ENCODE measurements at regions of chr11 and their contacts with region 1.

Region 1: DNA sequence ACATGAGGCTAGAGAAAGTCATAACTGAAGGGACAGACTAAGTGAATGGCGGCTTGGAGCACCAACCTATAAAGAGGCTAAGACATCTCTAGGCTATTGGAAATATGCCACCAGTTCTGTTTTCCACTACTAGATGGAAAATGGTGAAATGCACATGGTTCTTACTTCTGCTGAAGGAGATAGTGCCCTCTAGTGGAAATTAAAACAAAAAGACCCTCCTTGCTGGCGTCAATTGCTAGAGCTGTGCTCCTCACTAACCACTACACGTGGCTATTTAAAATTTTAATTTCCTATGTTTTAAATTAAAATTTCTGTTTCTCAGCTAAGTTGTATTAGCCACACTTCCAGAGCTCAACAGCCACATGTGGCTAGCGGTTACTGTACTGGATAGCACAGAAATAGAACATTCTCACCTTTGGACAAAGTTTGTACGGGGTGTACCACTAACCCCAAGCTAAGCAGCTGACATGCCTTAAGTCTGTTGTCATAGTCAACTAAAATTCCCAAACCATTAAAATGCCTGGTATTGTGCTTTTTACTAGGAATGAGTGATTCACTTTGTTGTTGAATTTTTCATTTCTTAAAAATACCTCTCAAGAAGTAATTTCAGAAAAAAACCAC is 34.1 kb upstream of the CALCA start:
- DNase-seq: peak in 3 of 9 experiments; percentile 13 to 61 (median 50)
- ATAC-seq: peak; percentile 34
- H3K4me3 ChIP-seq: no peak overlapping the region
- H3K4me3 Mint-ChIP-seq: no peak overlapping the region
- H3K27ac ChIP-seq: no peak overlapping the region
- H3K27ac Mint-ChIP-seq: no peak overlapping the region
- H3K4me1 ChIP-seq: no peaks in the 10 kb centered on the region
- H3K4me1 Mint-ChIP-seq: no peaks in the 10 kb centered on the region
- H3K27me3 ChIP-seq: no peaks in the 10 kb centered on the region
- H3K27me3 Mint-ChIP-seq: peaks cover 34% of the 10 kb centered on the region
- CTCF ChIP-seq: peak; percentile 56

Region 2: DNA sequence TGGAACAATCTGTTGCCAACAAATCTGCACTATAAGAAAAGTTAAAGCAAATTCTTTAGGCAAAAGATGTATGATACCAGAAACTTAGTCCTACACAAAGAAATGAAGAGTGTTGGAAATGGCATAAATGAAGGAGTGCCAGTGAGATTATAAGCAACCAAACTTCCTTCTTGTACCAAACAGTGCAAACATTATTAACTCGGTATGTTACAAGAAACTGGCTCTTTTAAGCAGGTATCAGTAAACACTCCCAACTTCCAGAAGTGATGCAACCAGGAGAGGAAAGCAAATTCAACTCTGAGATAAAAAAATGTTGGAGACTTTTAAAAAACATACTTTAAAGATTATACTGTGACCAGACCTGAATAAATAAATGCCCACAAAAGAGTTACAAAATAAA is 535.1 kb before region 1 on chr11:
- CTCF ChIA-PET with region 1: no interaction called
- POLR2A ChIA-PET with region 1: no interaction called
- intact Hi-C with region 1: loop called in 1 of 2 experiments (anchors 10 kb)
- DNase-seq: no peak
- ATAC-seq: no peak
- H3K4me3 ChIP-seq: no peak overlapping the region
- H3K4me3 Mint-ChIP-seq: no peak overlapping the region
- H3K27ac ChIP-seq: no peak overlapping the region
- H3K27ac Mint-ChIP-seq: peak overlapping the region; percentile 14
- H3K4me1 ChIP-seq: peaks cover 5% of the 10 kb centered on the region
- H3K4me1 Mint-ChIP-seq: peaks cover 51% of the 10 kb centered on the region
- H3K27me3 ChIP-seq: no peaks in the 10 kb centered on the region
- H3K27me3 Mint-ChIP-seq: no peaks in the 10 kb centered on the region
- CTCF ChIP-seq: no peak

Region 3: DNA sequence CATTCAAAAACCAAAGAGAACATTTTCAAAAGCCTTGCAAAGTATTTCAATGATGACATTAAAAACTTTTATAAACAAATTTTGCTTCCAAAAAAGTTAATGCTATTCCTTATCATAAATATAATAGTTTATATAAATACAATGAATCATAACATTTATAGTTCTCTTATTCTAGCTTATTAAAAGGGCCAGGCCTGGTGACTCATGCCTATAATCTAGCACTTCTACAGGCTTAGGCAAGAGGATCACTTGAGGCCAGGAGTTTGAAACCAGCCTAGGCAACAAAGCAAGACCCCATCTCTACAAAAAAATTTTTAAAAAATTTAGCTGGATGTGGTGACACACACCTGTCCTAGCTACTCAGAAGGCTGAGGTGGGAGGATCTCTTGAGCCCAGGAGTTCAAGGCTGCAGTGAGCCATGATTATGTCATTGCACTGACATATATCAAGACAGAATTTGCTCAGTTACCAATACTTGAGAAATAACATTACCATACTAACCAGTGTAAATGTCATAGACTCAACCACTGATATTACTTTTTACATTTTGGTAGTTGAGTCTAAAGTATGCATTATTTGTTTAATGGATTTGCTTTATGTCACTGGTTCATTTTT is 170.7 kb before region 1 on chr11:
- CTCF ChIA-PET with region 1: no interaction called
- POLR2A ChIA-PET with region 1: no interaction called
- intact Hi-C with region 1: no loop called
- DNase-seq: no peak
- ATAC-seq: no peak
- H3K4me3 ChIP-seq: no peak overlapping the region
- H3K4me3 Mint-ChIP-seq: no peak overlapping the region
- H3K27ac ChIP-seq: no peak overlapping the region
- H3K27ac Mint-ChIP-seq: no peak overlapping the region
- H3K4me1 ChIP-seq: no peaks in the 10 kb centered on the region
- H3K4me1 Mint-ChIP-seq: no peaks in the 10 kb centered on the region
- H3K27me3 ChIP-seq: no peaks in the 10 kb centered on the region
- H3K27me3 Mint-ChIP-seq: no peaks in the 10 kb centered on the region
- CTCF ChIP-seq: no peak

Region 4: GRCh38 chr11:14967581-14968243 is 38.5 kb before region 1 on chr11:
- CTCF ChIA-PET with region 1: no interaction called
- POLR2A ChIA-PET with region 1: no interaction called
- intact Hi-C with region 1: no loop called
- DNase-seq: no peak
- ATAC-seq: no peak
- H3K4me3 ChIP-seq: no peak overlapping the region
- H3K4me3 Mint-ChIP-seq: no peak overlapping the region
- H3K27ac ChIP-seq: no peak overlapping the region
- H3K27ac Mint-ChIP-seq: no peak overlapping the region
- H3K4me1 ChIP-seq: peaks cover 3% of the 10 kb centered on the region
- H3K4me1 Mint-ChIP-seq: peaks cover 5% of the 10 kb centered on the region
- H3K27me3 ChIP-seq: peaks cover 0 to 2% of the 10 kb centered on the region in 2 experiments
- H3K27me3 Mint-ChIP-seq: peaks cover 46% of the 10 kb centered on the region
- CTCF ChIP-seq: no peak

Region 5: GRCh38 chr11:15113381-15113780 is 107.1 kb after region 1 on chr11:
- CTCF ChIA-PET with region 1: no interaction called
- POLR2A ChIA-PET with region 1: no interaction called
- intact Hi-C with region 1: no loop called
- DNase-seq: peak in 2 of 9 experiments; percentile 8 to 25
- ATAC-seq: peak; percentile 36
- H3K4me3 ChIP-seq: no peak overlapping the region
- H3K4me3 Mint-ChIP-seq: no peak overlapping the region
- H3K27ac ChIP-seq: no peak overlapping the region
- H3K27ac Mint-ChIP-seq: no peak overlapping the region
- H3K4me1 ChIP-seq: peaks cover 12% of the 10 kb centered on the region
- H3K4me1 Mint-ChIP-seq: peaks cover 16% of the 10 kb centered on the region
- H3K27me3 ChIP-seq: peaks cover 0 to 5% of the 10 kb centered on the region in 2 experiments
- H3K27me3 Mint-ChIP-seq: peaks cover 45% of the 10 kb centered on the region
- CTCF ChIP-seq: no peak